ENCODE measurements at regions of chr11 and their contacts with region 1.

Region 1: GRCh38 chr11:4054643-4055042 is 40.0 kb upstream of the RRM1 start:
- DNase-seq: no peak
- ATAC-seq: no peak
- H3K4me3 ChIP-seq: no peak overlapping the region
- H3K27ac ChIP-seq: no peak overlapping the region
- H3K4me1 ChIP-seq: no peaks in the 10 kb centered on the region
- H3K27me3 ChIP-seq: no peaks in the 10 kb centered on the region
- CTCF ChIP-seq: no peak
- EP300 ChIP-seq: no peak
- POLR2A ChIP-seq: no peak
- RAD21 ChIP-seq: no peak

Region 2: GRCh38 chr11:4065601-4066377 is 11.1 kb after region 1 on chr11:
- CTCF ChIA-PET with region 1: no interaction called
- POLR2A ChIA-PET with region 1: interaction called, 12 read pairs
- in situ Hi-C with region 1: no loop called
- intact Hi-C with region 1: no loop called
- DNase-seq: no peak
- ATAC-seq: no peak
- H3K4me3 ChIP-seq: no peak overlapping the region
- H3K27ac ChIP-seq: no peak overlapping the region
- H3K4me1 ChIP-seq: no peaks in the 10 kb centered on the region
- H3K27me3 ChIP-seq: no peaks in the 10 kb centered on the region
- CTCF ChIP-seq: no peak
- EP300 ChIP-seq: no peak
- POLR2A ChIP-seq: no peak
- RAD21 ChIP-seq: no peak

Region 3: GRCh38 chr11:4102711-4103110 is 48.1 kb after region 1 on chr11:
- CTCF ChIA-PET with region 1: no interaction called
- POLR2A ChIA-PET with region 1: no interaction called
- in situ Hi-C with region 1: no loop called
- intact Hi-C with region 1: no loop called
- DNase-seq: no peak
- ATAC-seq: no peak
- H3K4me3 ChIP-seq: no peak overlapping the region
- H3K27ac ChIP-seq: no peak overlapping the region
- H3K4me1 ChIP-seq: peaks cover 0 to 8% of the 10 kb centered on the region in 2 experiments; a peak in 1 of 5 replicates
- H3K27me3 ChIP-seq: no peaks in the 10 kb centered on the region
- CTCF ChIP-seq: no peak
- EP300 ChIP-seq: no peak
- POLR2A ChIP-seq: no peak
- RAD21 ChIP-seq: no peak